H1 (cell line): ENCODE measurements at regions of chr5 and their contacts with region 1.

Region 1: DNA sequence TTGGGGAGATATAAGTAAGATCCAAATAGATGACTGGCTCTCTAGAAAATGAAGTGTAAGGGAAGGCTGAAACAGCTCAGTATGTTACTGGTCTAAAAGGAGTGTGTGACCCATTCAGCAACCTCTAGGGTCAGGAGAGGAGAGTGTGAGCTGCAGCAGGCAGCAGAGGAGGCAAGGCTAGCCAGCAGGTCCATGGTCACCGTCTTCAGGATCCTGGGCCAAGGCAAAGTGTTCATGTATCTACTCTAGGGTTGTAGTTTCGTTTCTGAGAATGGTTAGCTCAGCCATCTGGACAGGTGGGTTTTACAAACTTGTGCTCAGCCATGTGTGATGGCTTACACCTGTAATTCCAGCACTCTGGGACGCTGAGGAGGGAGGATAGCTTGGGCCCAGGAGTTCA is 13.7 kb downstream of the MYO10 start:
- DNase-seq: no peak
- H3K4me3 ChIP-seq: no peak overlapping the region
- H3K27ac ChIP-seq: no peak overlapping the region
- H3K4me1 ChIP-seq: no peaks in the 10 kb centered on the region
- H3K27me3 ChIP-seq: no peaks in the 10 kb centered on the region
- CTCF ChIP-seq: no peak
- EP300 ChIP-seq: no peak
- POLR2A ChIP-seq: no peak
- RAD21 ChIP-seq: no peak

Region 2: DNA sequence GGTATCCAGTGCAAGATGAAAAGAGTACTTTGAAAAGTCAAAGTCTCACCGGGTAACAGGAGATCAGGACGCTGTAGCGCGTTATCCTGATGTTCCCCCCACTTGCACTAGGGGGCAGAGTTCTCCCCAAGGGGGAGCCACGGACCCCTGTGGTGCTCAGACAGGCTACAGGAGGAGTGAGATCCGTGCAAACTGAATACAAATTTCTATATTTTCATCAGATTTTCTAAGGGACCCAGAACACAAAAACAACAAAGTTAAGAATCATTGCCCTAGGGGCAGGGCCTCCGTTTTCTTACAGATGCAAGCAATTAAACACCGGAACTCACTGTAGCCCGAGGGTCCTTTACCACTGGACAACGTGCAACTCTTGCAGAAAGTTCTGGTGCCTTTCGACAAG is 11.7 kb after region 1 on chr5:
- CTCF ChIA-PET with region 1: interaction called, 10 read pairs
- POLR2A ChIA-PET with region 1: interaction called, 5 read pairs
- DNase-seq: peak; percentile 51 to 94
- H3K4me3 ChIP-seq: peak overlapping the region; percentile 35 to 97 (median 81); a peak in 5 of 8 replicates
- H3K27ac ChIP-seq: no peak overlapping the region
- H3K4me1 ChIP-seq: peaks cover 2 to 22% (median 5%) of the 10 kb centered on the region in 4 experiments; a peak in 6 of 7 replicates
- H3K27me3 ChIP-seq: peaks cover 11 to 29% (median 22%) of the 10 kb centered on the region in 4 experiments
- CTCF ChIP-seq: peak; percentile 80 to 88 (median 86)
- EP300 ChIP-seq: no peak
- POLR2A ChIP-seq: no peak
- RAD21 ChIP-seq: peak; percentile 68 to 81